Activated B cell treated with CpG ODN at 0.5 μM for 24 hours (primary cell): ENCODE measurements at regions of chr6 and their contacts with region 1.

Region 1: GRCh38 chr6:159968440-159969203 is at the start of gene IGF2R:
- DNase-seq: peak; percentile 93
- ATAC-seq: peak; percentile 87
- H3K4me3 Mint-ChIP-seq: peak within 1 kb of the TSS; percentile 88
- H3K27ac Mint-ChIP-seq: peak within 1 kb of the TSS; percentile 78
- H3K4me1 Mint-ChIP-seq: peaks cover 35% of the 10 kb centered on the region
- H3K27me3 Mint-ChIP-seq: no peaks in the 10 kb centered on the region
- CTCF ChIP-seq: no peak
- total RNA-seq, gene IGF2R: 69.6 and 79.5 TPM in 2 replicates

Region 2: GRCh38 chr6:159789377-159790148 is 179.1 kb before region 1 on chr6 and contains the start of gene TCP1:
- CTCF ChIA-PET with region 1: no interaction called
- POLR2A ChIA-PET with region 1: interaction called, 6 read pairs
- intact Hi-C with region 1: loop called (anchors 1 kb)
- DNase-seq: peak; percentile 90
- ATAC-seq: peak; percentile 78
- H3K4me3 Mint-ChIP-seq: peak within 1 kb of the TSS; percentile 95
- H3K27ac Mint-ChIP-seq: peak within 1 kb of the TSS; percentile 95
- H3K4me1 Mint-ChIP-seq: peaks cover 49% of the 10 kb centered on the region
- H3K27me3 Mint-ChIP-seq: no peaks in the 10 kb centered on the region
- CTCF ChIP-seq: no peak
- total RNA-seq, gene TCP1: 181 and 199 TPM in 2 replicates

Region 3: DNA sequence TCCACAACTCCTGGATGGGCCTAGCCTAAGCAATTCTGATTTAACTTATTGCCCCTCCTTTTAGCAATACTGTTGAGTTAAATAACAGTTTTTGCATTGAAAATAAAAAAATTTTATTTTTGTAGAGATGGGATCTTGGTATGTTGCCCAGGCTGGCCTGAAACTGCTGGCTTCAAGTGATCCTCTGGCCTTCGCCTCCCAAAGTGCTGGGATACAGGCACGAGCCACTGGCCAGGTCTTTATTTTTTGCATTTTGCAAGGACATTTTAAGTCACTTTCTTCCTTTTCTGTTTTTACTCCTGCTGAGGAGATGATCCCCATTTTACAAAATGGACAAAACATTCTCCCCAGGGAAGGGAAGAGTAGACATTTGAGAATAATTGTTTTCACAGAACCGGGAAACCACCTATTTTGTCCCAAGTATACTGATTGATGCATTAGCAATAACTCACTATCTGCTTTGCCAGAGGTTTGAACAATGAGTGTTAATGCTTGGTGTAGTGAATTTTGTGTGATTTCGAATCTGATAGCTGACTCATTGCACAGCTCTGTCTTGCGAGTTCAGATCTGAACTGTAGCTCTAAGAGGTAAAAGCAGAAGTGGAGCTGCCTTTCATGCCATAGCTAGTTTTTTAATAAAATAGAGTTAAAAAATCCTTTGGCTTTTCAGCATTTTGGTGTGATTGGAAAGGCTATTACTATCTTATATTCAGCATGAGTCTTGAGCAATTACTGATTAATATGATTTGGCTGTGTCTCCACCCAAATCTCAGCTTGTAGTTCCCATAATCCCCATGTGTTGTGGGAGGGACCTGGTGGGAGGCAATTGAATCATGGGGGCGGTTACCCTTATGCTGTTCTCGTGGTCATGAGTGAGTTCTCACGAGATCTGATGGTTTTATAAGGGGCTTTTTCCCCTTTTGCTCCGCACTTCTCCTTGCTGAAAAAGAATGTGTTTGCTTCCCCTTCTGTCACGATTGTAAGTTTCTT is 21.2 kb after region 1 on chr6:
- CTCF ChIA-PET with region 1: no interaction called
- POLR2A ChIA-PET with region 1: interaction called, 5 read pairs
- intact Hi-C with region 1: loop called (anchors 2 kb)
- DNase-seq: no peak
- ATAC-seq: peak; percentile 85
- H3K4me3 Mint-ChIP-seq: peak overlapping the region; percentile 33
- H3K27ac Mint-ChIP-seq: peak overlapping the region; percentile 72
- H3K4me1 Mint-ChIP-seq: peaks cover 51% of the 10 kb centered on the region
- H3K27me3 Mint-ChIP-seq: no peaks in the 10 kb centered on the region
- CTCF ChIP-seq: no peak

Region 4: GRCh38 chr6:160069050-160069454 is 100.4 kb after region 1 on chr6:
- CTCF ChIA-PET with region 1: no interaction called
- POLR2A ChIA-PET with region 1: interaction called, 4 read pairs
- intact Hi-C with region 1: loop called (anchors 2 kb)
- DNase-seq: peak; percentile 38
- ATAC-seq: peak; percentile 89
- H3K4me3 Mint-ChIP-seq: peak overlapping the region; percentile 42
- H3K27ac Mint-ChIP-seq: peak overlapping the region; percentile 5
- H3K4me1 Mint-ChIP-seq: peaks cover 40% of the 10 kb centered on the region
- H3K27me3 Mint-ChIP-seq: no peaks in the 10 kb centered on the region
- CTCF ChIP-seq: no peak

Region 5: DNA sequence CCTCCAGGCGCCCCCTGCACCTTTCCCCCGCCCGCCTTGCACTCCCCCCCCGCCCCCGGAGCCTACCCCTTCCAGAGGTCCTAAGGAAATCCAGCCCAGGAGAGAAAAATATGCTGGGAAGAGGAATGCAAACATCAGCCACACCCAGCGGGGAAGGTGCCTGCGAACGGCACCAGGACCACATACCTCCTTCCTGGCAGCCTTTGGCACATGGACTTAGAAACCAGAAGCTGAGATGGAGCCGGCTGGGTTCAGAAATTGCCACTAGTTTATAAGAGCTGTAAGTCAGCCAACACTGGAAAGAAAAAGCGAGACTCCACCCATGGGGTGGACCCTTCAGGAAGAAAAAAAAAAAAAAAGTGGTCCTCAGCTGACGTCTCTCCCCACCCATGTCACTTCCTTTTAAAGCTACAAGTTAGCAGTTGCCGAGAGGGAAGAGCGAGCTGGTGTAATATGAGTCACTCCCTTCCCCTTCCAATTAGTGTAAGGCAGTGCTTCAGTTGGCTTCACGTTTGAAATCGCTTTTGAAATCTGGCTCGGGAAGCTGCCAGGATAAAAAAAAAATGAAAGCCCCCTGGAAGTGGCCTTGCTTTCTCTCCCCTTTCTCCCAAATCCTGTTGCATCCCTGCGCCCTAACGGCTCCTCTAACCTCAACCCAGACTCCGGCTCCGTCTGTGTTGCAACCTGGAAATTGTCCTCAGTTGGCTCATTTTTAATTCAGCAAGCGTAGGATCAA is 1305.3 kb after region 1 on chr6 and contains the start of gene AGPAT4:
- CTCF ChIA-PET with region 1: no interaction called
- POLR2A ChIA-PET with region 1: no interaction called
- intact Hi-C with region 1: loop called (anchors 10 kb)
- DNase-seq: peak; percentile 39
- ATAC-seq: peak; percentile 96
- H3K4me3 Mint-ChIP-seq: peak within 1 kb of the TSS; percentile 89
- H3K27ac Mint-ChIP-seq: peak within 1 kb of the TSS; percentile 76
- H3K4me1 Mint-ChIP-seq: peaks cover 17% of the 10 kb centered on the region
- H3K27me3 Mint-ChIP-seq: peaks cover 7% of the 10 kb centered on the region
- CTCF ChIP-seq: no peak
- total RNA-seq, gene AGPAT4: 2.8 and 4.7 TPM in 2 replicates